ENCODE measurements at regions of chr14 and their contacts with region 1.

Region 1: DNA sequence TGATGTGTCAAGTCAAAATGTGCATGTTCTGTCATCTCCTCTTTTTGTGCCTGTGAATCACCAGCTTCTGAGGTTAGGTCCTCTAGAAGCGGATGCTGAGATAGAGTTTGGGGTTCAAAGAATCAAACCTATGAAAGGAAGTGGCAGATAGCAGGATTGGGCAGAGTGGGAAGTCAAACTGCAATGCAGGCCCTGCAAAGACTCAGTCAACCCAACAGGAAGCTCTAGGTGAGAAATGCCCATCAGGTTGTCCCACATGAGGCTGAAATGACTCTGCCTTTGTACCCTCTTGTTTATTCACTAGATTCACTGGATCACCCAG is 4.5 kb upstream of the MIA2 start:
- DNase-seq: peak; percentile 91
- H3K4me3 Mint-ChIP-seq: peak overlapping the region; percentile 54
- H3K27ac Mint-ChIP-seq: peak overlapping the region; percentile 90
- H3K4me1 Mint-ChIP-seq: peaks cover 38% of the 10 kb centered on the region
- H3K27me3 Mint-ChIP-seq: no peaks in the 10 kb centered on the region

Region 2: GRCh38 chr14:39266871-39267591 is 37.8 kb after region 1 on chr14:
- intact Hi-C with region 1: loop called (anchors 1 kb)
- DNase-seq: peak; percentile 94
- H3K4me3 Mint-ChIP-seq: peak overlapping the region; percentile 82
- H3K27ac Mint-ChIP-seq: peak overlapping the region; percentile 81
- H3K4me1 Mint-ChIP-seq: peaks cover 39% of the 10 kb centered on the region
- H3K27me3 Mint-ChIP-seq: no peaks in the 10 kb centered on the region

Region 3: DNA sequence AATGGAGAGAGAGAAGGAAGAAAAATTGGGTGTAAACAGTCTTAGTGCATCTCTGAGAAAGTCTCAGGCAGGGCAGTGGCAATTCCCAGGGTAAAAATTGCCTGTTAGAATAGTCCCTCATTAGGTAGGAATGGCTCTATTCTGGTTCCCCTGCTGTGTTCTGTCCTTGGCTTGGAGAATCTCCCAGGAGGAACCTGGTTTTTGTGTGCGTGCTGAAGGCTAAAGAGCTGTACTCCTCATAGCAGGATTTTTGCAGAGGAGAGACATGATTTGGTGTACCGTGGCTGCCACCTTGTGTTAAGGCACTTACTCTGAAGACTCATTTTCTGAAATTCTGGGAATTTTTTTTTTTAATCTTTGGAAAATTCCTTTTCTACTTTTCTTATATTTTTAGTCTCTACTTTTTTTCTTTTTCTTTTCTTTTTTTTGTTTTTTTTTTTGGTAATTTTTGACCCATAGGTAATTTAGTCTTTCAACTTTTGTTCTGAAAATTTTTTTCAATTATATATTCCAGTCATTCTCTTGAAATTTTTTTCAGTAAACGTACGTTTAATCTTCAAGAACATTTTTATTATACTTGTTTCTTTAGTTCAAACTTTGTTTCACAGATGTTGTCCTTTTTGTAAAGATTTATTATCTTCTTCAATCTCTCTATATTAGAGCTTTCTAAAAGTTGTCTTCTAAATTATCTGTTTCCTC is 139.2 kb after region 1 on chr14:
- intact Hi-C with region 1: loop called (anchors 1 kb)
- DNase-seq: peak; percentile 80
- H3K4me3 Mint-ChIP-seq: no peak overlapping the region
- H3K27ac Mint-ChIP-seq: no peak overlapping the region
- H3K4me1 Mint-ChIP-seq: peaks cover 2% of the 10 kb centered on the region
- H3K27me3 Mint-ChIP-seq: no peaks in the 10 kb centered on the region

Region 4: DNA sequence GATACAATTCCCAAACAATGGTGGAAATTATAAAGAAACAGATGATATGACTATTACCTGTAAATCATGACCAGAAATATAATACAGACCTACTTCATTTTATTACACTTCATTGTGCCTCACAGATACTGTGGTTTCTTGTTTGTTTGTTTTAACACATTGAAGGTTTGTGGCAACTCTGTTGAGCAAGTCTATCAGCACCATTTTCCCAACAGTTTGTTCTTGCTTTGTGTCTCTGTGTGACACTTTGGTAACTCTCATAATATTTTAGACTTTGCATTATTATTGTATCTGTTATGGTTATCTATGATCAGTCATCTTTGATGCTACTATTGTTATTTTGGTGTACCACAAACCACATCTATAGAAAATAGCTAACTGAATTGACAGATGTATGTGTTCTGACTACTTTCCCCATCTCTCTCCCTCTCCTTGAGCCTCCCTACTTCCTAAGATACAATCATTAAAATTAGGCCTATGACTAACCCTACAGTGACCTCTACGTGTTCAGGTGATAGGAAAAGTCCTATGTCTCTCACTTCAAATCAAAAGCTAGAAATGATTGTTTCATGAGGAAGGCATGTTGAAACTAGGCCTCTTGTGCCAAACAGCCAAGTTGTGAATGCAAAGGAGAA is 154.0 kb after region 1 on chr14:
- intact Hi-C with region 1: loop called (anchors 1 kb)
- DNase-seq: no peak
- H3K4me3 Mint-ChIP-seq: no peak overlapping the region
- H3K27ac Mint-ChIP-seq: peak overlapping the region; percentile 8
- H3K4me1 Mint-ChIP-seq: peaks cover 11% of the 10 kb centered on the region
- H3K27me3 Mint-ChIP-seq: no peaks in the 10 kb centered on the region

Measured in activated CD4-positive, alpha-beta T cell treated with anti-CD3 and anti-CD28 coated beads, Interleukin-2, amount 10 ng/mL, durations not matched to agents 24 days and 14 days (primary cell).